ENCODE measurements at regions of chr12 and their contacts with region 1.

Region 1: GRCh38 chr12:124466216-124467128 is 100.9 kb downstream of the NCOR2 start:
- DNase-seq: peak; percentile 85 to 95 (median 88)
- H3K4me3 ChIP-seq: peak overlapping the region; percentile 77
- H3K4me3 Mint-ChIP-seq: peak overlapping the region; percentile 77 to 93 (median 82)
- H3K27ac ChIP-seq: peak overlapping the region; percentile 59
- H3K27ac Mint-ChIP-seq: peak overlapping the region; percentile 85 to 99 (median 95)
- H3K4me1 ChIP-seq: peaks cover 30% of the 10 kb centered on the region
- H3K4me1 Mint-ChIP-seq: peaks cover 47 to 76% (median 67%) of the 10 kb centered on the region in 3 donors
- H3K27me3 ChIP-seq: no peaks in the 10 kb centered on the region
- H3K27me3 Mint-ChIP-seq: no peaks in the 10 kb centered on the region

Region 2: DNA sequence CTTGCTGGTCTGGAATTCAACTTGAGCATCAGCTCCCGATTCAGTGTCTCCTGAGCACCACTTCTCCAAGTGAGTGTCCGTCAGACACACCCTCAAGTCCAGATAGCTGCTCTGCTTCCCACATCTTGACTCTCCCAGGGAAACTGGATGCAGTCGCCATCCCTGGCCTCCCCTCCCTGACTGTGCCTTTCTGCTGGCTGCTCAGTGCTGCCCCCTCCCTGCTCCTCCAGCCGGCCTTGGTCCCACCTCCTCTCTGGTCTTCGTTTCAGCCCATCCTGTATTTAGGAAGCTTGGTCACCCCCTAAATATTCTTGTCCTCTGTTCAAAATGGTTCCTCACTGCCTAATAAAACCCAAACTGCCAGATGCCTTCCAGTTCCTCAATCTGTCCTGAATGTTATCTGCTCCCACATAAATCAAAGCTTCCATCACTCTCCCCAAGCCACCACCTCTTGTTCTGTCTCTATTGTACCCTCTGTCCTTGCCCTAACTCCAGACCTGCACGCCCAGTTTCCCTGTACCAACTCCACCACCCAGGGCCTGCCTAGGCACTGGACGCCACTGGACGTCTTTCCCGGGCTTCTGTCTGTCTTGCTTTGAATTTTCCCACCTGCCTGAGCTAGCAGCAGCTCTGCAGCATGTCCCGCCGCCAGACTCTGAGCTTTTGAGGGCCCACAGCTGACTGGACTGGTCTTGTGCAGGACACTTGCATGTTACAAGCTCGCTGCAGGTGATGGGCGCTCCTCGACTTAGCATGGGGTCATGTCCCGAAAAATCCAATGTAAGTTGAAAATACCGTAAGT is 527.6 kb before region 1 on chr12:
- CTCF ChIA-PET with region 1: no interaction called
- POLR2A ChIA-PET with region 1: no interaction called
- DNase-seq: no peak
- H3K4me3 ChIP-seq: peak overlapping the region; percentile 38
- H3K4me3 Mint-ChIP-seq: peak overlapping the region; percentile 64 to 89 (median 77)
- H3K27ac ChIP-seq: peak overlapping the region; percentile 12
- H3K27ac Mint-ChIP-seq: peak overlapping the region; percentile 85 to 99 (median 94)
- H3K4me1 ChIP-seq: peaks cover 21% of the 10 kb centered on the region
- H3K4me1 Mint-ChIP-seq: peaks cover 28 to 36% (median 29%) of the 10 kb centered on the region in 3 donors
- H3K27me3 ChIP-seq: no peaks in the 10 kb centered on the region
- H3K27me3 Mint-ChIP-seq: no peaks in the 10 kb centered on the region

Region 3: DNA sequence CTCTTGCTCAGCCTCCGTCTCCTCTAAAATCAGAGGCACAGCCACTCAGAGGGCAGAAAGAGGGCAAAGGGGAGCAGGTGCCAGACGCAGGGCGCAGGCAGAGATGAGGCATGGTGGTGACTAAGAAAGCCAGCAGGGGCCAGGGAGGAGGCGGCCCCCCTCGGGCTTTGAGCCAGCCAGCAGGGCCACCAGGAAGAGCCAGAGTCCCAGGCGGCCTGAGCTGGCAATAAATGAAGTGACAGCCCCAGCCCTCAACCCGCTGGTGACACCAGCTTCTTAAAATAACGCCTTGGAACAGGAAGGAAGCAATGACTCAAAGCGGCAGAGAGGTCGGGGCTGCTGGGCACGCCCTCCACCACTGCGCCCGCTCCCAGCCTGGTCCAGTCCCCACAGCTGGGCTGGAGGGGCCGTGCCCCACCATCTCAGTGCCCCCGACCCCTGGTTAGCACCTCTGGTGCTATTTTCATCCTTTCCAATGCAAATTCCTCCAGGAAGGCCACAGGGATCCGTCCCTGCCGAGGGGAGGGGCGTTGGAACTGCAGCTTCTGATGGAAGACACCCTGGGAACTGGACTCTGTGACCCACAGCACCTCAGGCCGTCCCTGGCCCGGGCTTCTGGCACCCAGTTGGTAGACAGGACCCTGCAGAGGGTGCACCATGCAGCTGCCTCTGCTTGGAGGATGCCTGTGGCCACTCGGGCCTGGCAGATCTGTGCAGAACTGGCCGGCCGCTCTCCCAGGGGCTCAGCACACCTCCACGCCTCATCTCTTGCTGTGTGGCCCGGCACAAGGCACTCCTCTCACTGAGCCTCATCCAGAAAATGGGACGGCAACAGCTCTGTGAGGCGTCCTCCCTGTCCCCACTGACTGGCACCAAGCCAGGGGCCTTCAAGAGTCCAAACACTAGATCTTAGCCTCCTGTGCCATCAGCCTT is 12.8 kb before region 1 on chr12:
- CTCF ChIA-PET with region 1: interaction called, 20 read pairs
- POLR2A ChIA-PET with region 1: interaction called, 4 read pairs
- DNase-seq: peak; percentile 58 to 93 (median 85)
- H3K4me3 ChIP-seq: peak overlapping the region; percentile 46
- H3K4me3 Mint-ChIP-seq: peak overlapping the region; percentile 58 to 84 (median 74)
- H3K27ac ChIP-seq: peak overlapping the region; percentile 91
- H3K27ac Mint-ChIP-seq: peak overlapping the region; percentile 67 to 98 (median 93)
- H3K4me1 ChIP-seq: peaks cover 72% of the 10 kb centered on the region
- H3K4me1 Mint-ChIP-seq: peaks cover 70 to 94% (median 77%) of the 10 kb centered on the region in 3 donors
- H3K27me3 ChIP-seq: no peaks in the 10 kb centered on the region
- H3K27me3 Mint-ChIP-seq: no peaks in the 10 kb centered on the region

Region 4: DNA sequence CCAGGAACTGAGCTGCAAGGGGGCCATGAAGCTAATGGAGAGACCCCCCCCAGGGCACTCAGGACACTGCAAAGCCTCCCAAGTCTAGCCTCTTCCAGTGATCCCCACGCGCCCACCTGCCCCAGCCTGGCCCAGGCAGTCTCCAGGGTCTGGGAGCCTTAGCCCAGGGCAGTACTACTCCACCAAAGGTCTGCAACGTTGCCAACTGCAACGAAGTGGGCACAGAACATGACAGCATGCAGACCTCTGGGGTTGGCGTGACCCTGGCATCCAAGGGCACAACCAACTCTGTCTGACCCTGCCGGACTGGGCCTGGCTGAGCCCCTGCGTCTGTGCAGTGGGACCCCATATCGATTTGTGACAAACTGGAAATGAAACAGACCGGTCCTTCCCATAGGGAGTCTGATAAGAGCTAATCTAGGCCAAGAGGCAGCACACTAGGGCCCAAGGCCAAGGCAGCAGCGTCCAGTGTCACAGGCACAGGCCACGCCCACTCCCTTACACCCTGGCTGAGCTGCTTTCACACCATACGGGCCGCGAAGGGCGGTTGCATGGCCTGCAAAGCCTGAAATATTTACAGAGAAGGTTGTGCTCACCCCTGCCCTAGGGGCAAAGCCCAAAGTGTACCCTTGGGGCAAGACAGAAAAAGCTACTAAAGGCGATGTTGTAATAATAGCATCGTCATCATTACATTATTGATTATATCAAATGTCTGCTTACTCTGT is 24.3 kb after region 1 on chr12:
- CTCF ChIA-PET with region 1: no interaction called
- POLR2A ChIA-PET with region 1: no interaction called
- DNase-seq: no peak
- H3K4me3 ChIP-seq: no peak overlapping the region
- H3K4me3 Mint-ChIP-seq: no peak overlapping the region
- H3K27ac ChIP-seq: no peak overlapping the region
- H3K27ac Mint-ChIP-seq: peak overlapping the region in 2 of 8 donors; percentile 42 to 43
- H3K4me1 ChIP-seq: peaks cover 14% of the 10 kb centered on the region
- H3K4me1 Mint-ChIP-seq: peaks cover 17 to 40% (median 36%) of the 10 kb centered on the region in 3 donors
- H3K27me3 ChIP-seq: no peaks in the 10 kb centered on the region
- H3K27me3 Mint-ChIP-seq: no peaks in the 10 kb centered on the region

Region 5: DNA sequence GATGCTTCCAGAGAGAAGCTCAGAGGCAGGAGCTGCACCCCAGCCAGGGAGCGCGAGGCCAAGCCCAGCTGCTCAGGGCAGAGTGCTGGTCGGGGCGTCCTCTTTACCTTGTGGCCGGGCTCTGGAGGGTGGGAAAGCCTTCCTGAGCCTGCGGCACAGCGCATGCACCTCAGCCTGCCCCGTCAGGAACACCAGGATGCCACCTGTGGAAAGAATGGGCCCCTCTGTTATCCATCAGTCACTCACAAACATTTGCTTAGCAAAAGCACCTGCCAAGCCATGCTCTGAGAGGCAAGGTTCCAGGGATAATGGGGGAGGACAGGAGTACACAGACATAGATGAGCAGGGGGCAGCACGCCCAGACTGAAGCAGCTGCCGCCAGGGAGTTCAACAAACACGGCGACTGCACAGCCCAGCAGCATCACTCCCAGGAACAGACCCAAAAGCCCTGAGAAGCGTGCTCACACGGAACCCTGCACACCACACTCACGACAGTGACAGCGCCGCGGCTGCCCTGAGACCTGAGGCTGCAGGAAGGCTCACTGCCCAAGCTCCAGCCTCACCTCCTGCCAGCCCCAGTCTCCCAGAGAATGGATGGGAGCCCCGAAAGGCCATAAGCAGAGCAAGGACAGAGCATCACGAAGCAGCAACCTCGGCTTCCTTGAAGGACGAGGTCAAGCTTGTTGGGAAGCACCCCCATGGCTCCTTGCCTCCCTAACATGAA is 500.7 kb after region 1 on chr12:
- CTCF ChIA-PET with region 1: no interaction called
- POLR2A ChIA-PET with region 1: no interaction called
- DNase-seq: no peak
- H3K4me3 ChIP-seq: no peak overlapping the region
- H3K4me3 Mint-ChIP-seq: no peak overlapping the region
- H3K27ac ChIP-seq: no peak overlapping the region
- H3K27ac Mint-ChIP-seq: peak overlapping the region in 1 of 8 donors; percentile 61
- H3K4me1 ChIP-seq: no peaks in the 10 kb centered on the region
- H3K4me1 Mint-ChIP-seq: no peaks in the 10 kb centered on the region
- H3K27me3 ChIP-seq: no peaks in the 10 kb centered on the region
- H3K27me3 Mint-ChIP-seq: no peaks in the 10 kb centered on the region

Measured in CD8-positive, alpha-beta memory T cell (primary cell).